ENCODE measurements at regions of chr2 and their contacts with region 1.

Region 1: DNA sequence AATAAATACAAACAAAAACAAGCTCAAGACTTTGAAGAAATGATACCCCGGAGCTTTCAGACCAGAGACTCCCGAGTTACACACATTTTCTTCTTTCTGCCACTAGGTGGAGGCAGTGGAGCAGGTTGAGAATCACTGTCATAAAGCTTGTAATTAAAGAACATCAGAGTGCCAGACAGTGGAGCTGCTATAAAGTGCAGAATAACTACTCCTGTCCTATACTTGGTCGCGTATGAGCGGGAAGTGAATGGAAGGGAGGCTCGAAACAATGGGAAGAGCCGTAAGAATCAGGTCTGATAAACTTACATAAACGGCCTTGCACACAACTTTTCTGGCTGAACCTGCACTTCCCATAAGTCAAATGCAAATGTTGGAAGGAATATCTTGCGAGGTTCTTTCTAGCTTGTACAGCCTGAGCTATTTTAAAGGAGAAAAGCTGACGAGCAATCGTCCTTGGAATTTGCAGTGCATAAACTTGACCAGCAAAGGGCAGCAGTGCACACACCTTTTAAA is 189.0 kb downstream of the RPIA start:
- DNase-seq: peak; percentile 63
- H3K4me3 ChIP-seq: no peak overlapping the region
- H3K27ac ChIP-seq: no peak overlapping the region
- H3K4me1 ChIP-seq: no peaks in the 10 kb centered on the region
- H3K27me3 ChIP-seq: peaks cover 10 to 40% of the 10 kb centered on the region in 2 experiments
- CTCF ChIP-seq: peak; percentile 65 to 68
- POLR2A ChIP-seq: no peak

Region 2: DNA sequence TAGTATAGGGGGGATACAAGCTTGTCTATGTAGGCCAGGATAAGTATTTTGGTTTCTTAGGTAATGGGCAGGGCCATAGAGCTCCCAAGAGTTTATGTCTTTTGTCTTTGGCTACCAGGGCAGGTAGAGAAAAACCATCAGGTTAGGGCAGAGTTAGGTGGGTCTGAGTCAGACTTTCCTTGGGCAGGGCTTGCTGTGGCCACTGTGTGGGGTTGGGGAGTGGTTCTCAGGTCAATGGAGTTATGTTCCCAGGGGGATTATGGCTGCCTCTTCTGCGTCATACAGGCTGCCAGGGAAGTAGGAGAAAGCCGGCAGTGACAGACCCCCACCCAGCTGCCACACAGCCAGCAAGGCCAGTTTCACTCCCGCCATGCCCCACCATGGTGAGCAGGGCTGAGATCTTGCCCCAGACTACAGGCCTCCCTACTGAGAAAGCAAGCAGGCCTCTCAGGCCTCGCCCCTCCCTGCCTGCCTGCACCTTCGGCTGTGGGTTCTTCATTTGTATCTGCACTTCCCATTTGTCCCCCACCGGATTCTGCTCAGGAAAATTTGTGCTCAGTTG is 133.5 kb before region 1 on chr2:
- CTCF ChIA-PET with region 1: interaction called, 16 read pairs
- POLR2A ChIA-PET with region 1: no interaction called
- dilution Hi-C with region 1: no loop called
- intact Hi-C with region 1: no loop called
- DNase-seq: no peak
- H3K4me3 ChIP-seq: no peak overlapping the region
- H3K27ac ChIP-seq: no peak overlapping the region
- H3K4me1 ChIP-seq: no peaks in the 10 kb centered on the region
- H3K27me3 ChIP-seq: no peaks in the 10 kb centered on the region
- CTCF ChIP-seq: no peak
- POLR2A ChIP-seq: no peak

Region 3: DNA sequence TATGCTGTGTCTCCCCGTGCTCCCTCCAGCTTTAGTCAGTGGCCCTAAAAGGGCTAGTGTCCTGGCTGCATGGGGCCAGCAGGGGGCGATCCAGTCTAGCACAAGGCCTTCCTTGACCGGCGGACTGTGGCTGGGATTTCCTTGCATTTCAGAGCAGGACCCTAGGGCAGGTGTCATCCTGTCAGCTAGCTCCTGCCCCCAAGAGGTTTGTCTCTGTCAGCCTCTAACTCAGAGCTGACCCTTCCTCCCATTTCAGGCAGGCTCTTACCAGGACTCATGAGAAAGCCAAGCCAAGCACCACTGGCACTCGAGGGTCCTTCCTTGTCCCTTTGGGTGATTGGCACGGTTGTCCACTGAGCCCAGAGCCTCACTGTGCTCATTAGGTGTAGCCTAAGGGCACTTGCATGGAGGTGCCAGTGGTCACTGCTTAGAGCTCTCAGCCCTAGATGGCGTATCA is 48.7 kb before region 1 on chr2:
- CTCF ChIA-PET with region 1: interaction called, 22 read pairs
- POLR2A ChIA-PET with region 1: no interaction called
- dilution Hi-C with region 1: no loop called
- intact Hi-C with region 1: no loop called
- DNase-seq: peak; percentile 23
- H3K4me3 ChIP-seq: no peak overlapping the region
- H3K27ac ChIP-seq: no peak overlapping the region
- H3K4me1 ChIP-seq: peaks cover 22% of the 10 kb centered on the region
- H3K27me3 ChIP-seq: no peaks in the 10 kb centered on the region
- CTCF ChIP-seq: peak; percentile 56 to 78
- POLR2A ChIP-seq: no peak

Region 4: GRCh38 chr2:88865801-88866371 is 14.6 kb before region 1 on chr2:
- CTCF ChIA-PET with region 1: interaction called, 50 read pairs
- POLR2A ChIA-PET with region 1: no interaction called
- dilution Hi-C with region 1: no loop called
- intact Hi-C with region 1: no loop called
- DNase-seq: no peak
- H3K4me3 ChIP-seq: no peak overlapping the region
- H3K27ac ChIP-seq: no peak overlapping the region
- H3K4me1 ChIP-seq: no peaks in the 10 kb centered on the region
- H3K27me3 ChIP-seq: peaks cover 5 to 6% of the 10 kb centered on the region in 2 experiments
- CTCF ChIP-seq: no peak
- POLR2A ChIP-seq: no peak

Region 5: DNA sequence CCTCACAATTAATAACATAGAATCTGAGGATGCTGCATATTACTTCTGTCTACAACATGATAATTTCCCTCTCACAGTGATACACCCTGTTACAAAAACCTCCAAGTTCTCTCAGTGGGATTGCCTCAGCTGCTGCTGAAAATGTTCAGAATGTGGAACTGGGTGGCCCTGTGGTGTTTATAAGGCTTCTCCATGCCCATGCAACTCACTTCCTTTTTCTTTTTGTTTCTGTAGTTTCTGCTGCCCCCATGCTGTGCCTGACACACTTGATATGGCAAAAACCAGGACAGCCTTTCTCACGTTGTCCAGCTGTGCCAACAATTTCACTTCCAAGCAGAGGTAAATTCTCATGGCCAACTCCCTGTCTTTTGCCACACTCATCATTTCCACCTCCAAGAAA is 17.2 kb after region 1 on chr2:
- CTCF ChIA-PET with region 1: interaction called, 42 read pairs
- POLR2A ChIA-PET with region 1: no interaction called
- dilution Hi-C with region 1: no loop called
- intact Hi-C with region 1: no loop called
- DNase-seq: no peak
- H3K4me3 ChIP-seq: no peak overlapping the region
- H3K27ac ChIP-seq: no peak overlapping the region
- H3K4me1 ChIP-seq: no peaks in the 10 kb centered on the region
- H3K27me3 ChIP-seq: peaks cover 1 to 13% of the 10 kb centered on the region in 2 experiments
- CTCF ChIP-seq: no peak
- POLR2A ChIP-seq: no peak

Region 6: GRCh38 chr2:88913280-88913679 is 32.8 kb after region 1 on chr2:
- CTCF ChIA-PET with region 1: interaction called, 33 read pairs
- POLR2A ChIA-PET with region 1: no interaction called
- dilution Hi-C with region 1: no loop called
- intact Hi-C with region 1: no loop called
- DNase-seq: no peak
- H3K4me3 ChIP-seq: no peak overlapping the region
- H3K27ac ChIP-seq: no peak overlapping the region
- H3K4me1 ChIP-seq: no peaks in the 10 kb centered on the region
- H3K27me3 ChIP-seq: peaks cover 5 to 18% of the 10 kb centered on the region in 2 experiments
- CTCF ChIP-seq: no peak
- POLR2A ChIP-seq: no peak

Region 7: DNA sequence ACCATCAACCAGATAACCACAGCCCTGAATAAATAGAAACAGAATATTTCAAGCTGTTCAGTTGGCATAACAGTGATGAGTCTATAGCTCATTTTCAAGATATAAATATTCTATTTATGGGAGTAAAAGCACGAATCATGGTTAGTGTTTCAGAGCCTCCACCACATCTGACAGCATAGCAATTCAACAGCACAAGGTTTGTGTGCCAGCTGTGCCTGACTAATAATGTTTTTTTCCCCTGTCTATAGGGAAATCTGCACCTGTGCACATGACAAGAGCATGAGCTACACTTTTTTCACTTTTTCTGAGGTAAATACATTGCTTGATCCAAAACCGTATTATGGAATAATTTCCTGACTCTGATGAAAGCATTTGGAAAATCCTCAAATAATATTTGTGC is 62.3 kb after region 1 on chr2:
- CTCF ChIA-PET with region 1: interaction called, 28 read pairs
- POLR2A ChIA-PET with region 1: no interaction called
- dilution Hi-C with region 1: no loop called
- intact Hi-C with region 1: no loop called
- DNase-seq: no peak
- H3K4me3 ChIP-seq: no peak overlapping the region
- H3K27ac ChIP-seq: no peak overlapping the region
- H3K4me1 ChIP-seq: no peaks in the 10 kb centered on the region
- H3K27me3 ChIP-seq: peaks cover 0 to 2% of the 10 kb centered on the region in 2 experiments
- CTCF ChIP-seq: no peak
- POLR2A ChIP-seq: no peak

Measured in endothelial cell of umbilical vein (primary cell).